Naive thymus-derived CD4-positive, alpha-beta T cell (primary cell): ENCODE measurements at regions of chr22 and their contacts with region 1.

Region 1: DNA sequence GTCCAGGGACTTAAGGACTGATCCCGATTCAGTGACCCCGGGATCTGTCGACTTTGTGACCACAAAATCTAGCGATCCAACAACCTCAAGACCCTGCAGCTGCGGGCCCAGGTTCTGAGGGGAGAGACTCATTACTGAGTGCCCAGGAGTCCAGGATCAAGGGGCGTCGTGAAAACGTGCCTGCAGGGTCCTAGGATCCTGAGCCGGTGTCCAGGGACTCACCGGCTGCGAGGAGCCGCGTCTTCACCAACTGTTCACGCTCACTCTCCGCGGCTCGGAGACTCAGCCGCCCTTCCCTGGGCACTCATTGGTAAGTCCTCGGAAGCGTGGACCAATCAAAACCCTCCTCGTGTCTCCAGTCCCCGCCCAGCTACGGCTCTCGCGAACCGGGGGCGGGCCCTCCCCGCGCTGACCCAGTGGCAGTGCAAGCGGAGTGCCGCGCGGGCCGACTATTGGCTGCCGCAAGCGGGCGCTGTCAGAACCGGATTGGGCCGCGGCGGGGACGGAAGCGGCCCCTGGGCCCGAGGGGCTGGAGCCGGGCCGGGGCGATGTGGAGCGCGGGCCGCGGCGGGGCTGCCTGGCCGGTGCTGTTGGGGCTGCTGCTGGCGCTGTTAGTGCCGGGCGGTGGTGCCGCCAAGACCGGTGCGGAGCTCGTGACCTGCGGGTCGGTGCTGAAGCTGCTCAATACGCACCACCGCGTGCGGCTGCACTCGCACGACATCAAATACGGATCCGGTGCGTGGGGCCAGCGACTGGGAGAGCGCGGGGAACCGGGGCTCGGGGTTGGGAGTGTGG is at the start of gene SDF2L1:
- DNase-seq: peak; percentile 93 to 99 (median 98)
- ATAC-seq: peak; percentile 98
- H3K4me3 ChIP-seq: peak within 1 kb of the TSS; percentile 67
- H3K4me3 Mint-ChIP-seq: peak within 1 kb of the TSS; percentile 80 to 91 (median 86)
- H3K27ac ChIP-seq: peak within 1 kb of the TSS; percentile 83
- H3K27ac Mint-ChIP-seq: peak within 1 kb of the TSS; percentile 53 to 98 (median 88)
- H3K4me1 ChIP-seq: peaks cover 18 to 20% of the 10 kb centered on the region in 2 donors
- H3K4me1 Mint-ChIP-seq: peaks cover 24 to 34% (median 32%) of the 10 kb centered on the region in 7 donors
- H3K27me3 ChIP-seq: no peaks in the 10 kb centered on the region
- H3K27me3 Mint-ChIP-seq: no peaks in the 10 kb centered on the region
- total RNA-seq, gene SDF2L1: 22.1 to 99.8 (median 31.7) TPM

Region 2: GRCh38 chr22:21587803-21588611 is 54.0 kb before region 1 on chr22:
- CTCF ChIA-PET with region 1: no interaction called
- POLR2A ChIA-PET with region 1: no interaction called
- intact Hi-C with region 1: loop called in 1 of 2 experiments (anchors 2 kb)
- DNase-seq: peak in 1 of 9 donors; percentile 55
- ATAC-seq: peak; percentile 78
- H3K4me3 ChIP-seq: no peak overlapping the region
- H3K4me3 Mint-ChIP-seq: peak overlapping the region; percentile 36 to 72 (median 56)
- H3K27ac ChIP-seq: peak overlapping the region; percentile 37
- H3K27ac Mint-ChIP-seq: peak overlapping the region; percentile 15 to 89 (median 79)
- H3K4me1 ChIP-seq: peaks cover 23 to 25% of the 10 kb centered on the region in 2 donors
- H3K4me1 Mint-ChIP-seq: peaks cover 42 to 71% (median 62%) of the 10 kb centered on the region in 7 donors
- H3K27me3 ChIP-seq: no peaks in the 10 kb centered on the region
- H3K27me3 Mint-ChIP-seq: no peaks in the 10 kb centered on the region

Region 3: DNA sequence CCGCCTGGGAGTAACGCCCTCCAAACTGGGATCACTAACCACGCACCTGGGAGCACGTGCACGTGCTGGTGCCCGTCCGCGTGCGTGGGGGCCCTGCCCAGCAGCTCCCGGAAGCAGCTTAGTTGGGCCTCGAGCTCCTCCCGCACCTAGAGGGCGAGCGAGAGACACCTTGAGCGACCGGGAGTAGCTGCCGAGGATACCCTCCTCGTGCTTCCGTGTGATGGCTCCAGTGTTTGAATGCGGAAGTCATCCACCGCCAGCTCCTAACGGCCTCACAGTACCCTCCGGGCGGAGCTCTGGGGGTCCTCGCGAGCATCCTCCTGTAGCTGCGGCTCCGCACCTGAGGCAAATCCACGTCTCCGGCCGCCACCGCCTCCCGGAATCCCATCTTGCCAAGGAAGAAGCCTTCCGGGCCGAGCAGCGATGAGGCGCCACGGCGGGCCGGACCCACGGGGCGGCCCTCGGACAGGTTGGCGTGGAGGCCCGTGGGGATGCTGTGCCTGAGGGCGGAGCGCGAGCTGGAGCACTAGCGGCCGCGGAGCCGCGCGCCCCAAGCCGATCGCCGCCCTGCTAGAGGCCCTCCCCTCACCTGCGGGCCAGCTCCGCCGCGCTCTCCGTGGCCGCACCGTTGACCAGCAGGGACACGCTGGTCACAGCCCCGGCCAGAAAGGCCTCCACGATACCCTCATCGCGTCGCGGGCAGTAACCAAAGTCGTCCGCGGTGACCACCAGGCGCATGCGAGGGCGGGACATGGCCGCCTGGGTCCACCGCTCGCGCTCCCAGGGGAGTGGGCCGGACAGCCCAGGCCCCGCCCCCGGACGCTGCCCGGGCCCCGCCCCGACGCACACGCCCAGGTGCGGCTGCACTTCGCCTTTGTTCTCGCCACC is 12.5 kb before region 1 on chr22 and contains the start of gene YDJC:
- CTCF ChIA-PET with region 1: interaction called, 30 read pairs
- POLR2A ChIA-PET with region 1: interaction called, 93 read pairs
- intact Hi-C with region 1: loop called (anchors 1 kb)
- DNase-seq: peak; percentile 88 to 97 (median 93)
- ATAC-seq: peak; percentile 95
- H3K4me3 ChIP-seq: peak within 1 kb of the TSS; percentile 88
- H3K4me3 Mint-ChIP-seq: peak within 1 kb of the TSS; percentile 87 to 97 (median 91)
- H3K27ac ChIP-seq: peak within 1 kb of the TSS; percentile 92
- H3K27ac Mint-ChIP-seq: peak within 1 kb of the TSS; percentile 84 to 97 (median 93)
- H3K4me1 ChIP-seq: peaks cover 6 to 26% of the 10 kb centered on the region in 2 donors
- H3K4me1 Mint-ChIP-seq: peaks cover 29 to 44% (median 38%) of the 10 kb centered on the region in 7 donors
- H3K27me3 ChIP-seq: no peaks in the 10 kb centered on the region
- H3K27me3 Mint-ChIP-seq: no peaks in the 10 kb centered on the region
- total RNA-seq, gene YDJC: 29.0 to 56.0 (median 38.0) TPM

Region 4: GRCh38 chr22:21657361-21658032 is 15.5 kb after region 1 on chr22:
- CTCF ChIA-PET with region 1: interaction called, 9 read pairs
- POLR2A ChIA-PET with region 1: interaction called, 23 read pairs
- intact Hi-C with region 1: loop called (anchors 1 kb)
- DNase-seq: peak; percentile 61 to 90 (median 67)
- ATAC-seq: peak; percentile 96
- H3K4me3 ChIP-seq: peak overlapping the region; percentile 56
- H3K4me3 Mint-ChIP-seq: peak overlapping the region; percentile 75 to 94 (median 86)
- H3K27ac ChIP-seq: peak overlapping the region; percentile 62
- H3K27ac Mint-ChIP-seq: peak overlapping the region in 5 of 9 donors; percentile 38 to 91 (median 68)
- H3K4me1 ChIP-seq: peaks cover 0 to 14% of the 10 kb centered on the region in 2 donors
- H3K4me1 Mint-ChIP-seq: peaks cover 11 to 26% (median 13%) of the 10 kb centered on the region in 7 donors
- H3K27me3 ChIP-seq: no peaks in the 10 kb centered on the region
- H3K27me3 Mint-ChIP-seq: no peaks in the 10 kb centered on the region

Region 5: GRCh38 chr22:21849489-21849888 is 207.5 kb after region 1 on chr22:
- CTCF ChIA-PET with region 1: no interaction called
- POLR2A ChIA-PET with region 1: no interaction called
- intact Hi-C with region 1: no loop called
- DNase-seq: no peak
- ATAC-seq: no peak
- H3K4me3 ChIP-seq: no peak overlapping the region
- H3K4me3 Mint-ChIP-seq: peak overlapping the region in 3 of 10 donors; percentile 0 to 23 (median 7)
- H3K27ac ChIP-seq: no peak overlapping the region
- H3K27ac Mint-ChIP-seq: peak overlapping the region in 2 of 9 donors; percentile 14 to 21
- H3K4me1 ChIP-seq: peaks cover 5 to 27% of the 10 kb centered on the region in 2 donors
- H3K4me1 Mint-ChIP-seq: peaks cover 31 to 86% (median 68%) of the 10 kb centered on the region in 7 donors
- H3K27me3 ChIP-seq: no peaks in the 10 kb centered on the region
- H3K27me3 Mint-ChIP-seq: no peaks in the 10 kb centered on the region